ENCODE measurements at regions of chr7 and their contacts with region 1.

Region 1: GRCh38 chr7:20330240-20330927 is at the start of gene ITGB8:
- DNase-seq: peak in 1 of 2 experiments; percentile 81
- H3K4me3 ChIP-seq: peak within 1 kb of the TSS; percentile 55 to 80 (median 73)
- H3K27ac ChIP-seq: peak within 1 kb of the TSS; percentile 75
- H3K4me1 ChIP-seq: peaks cover 0 to 2% (median 0%) of the 10 kb centered on the region in 4 experiments; a peak in 2 of 7 replicates
- H3K27me3 ChIP-seq: no peaks in the 10 kb centered on the region
- CTCF ChIP-seq: no peak
- EP300 ChIP-seq: no peak
- POLR2A ChIP-seq: peak; percentile 59 to 94
- RAD21 ChIP-seq: no peak
- total RNA-seq, gene ITGB8: 3.6 TPM in 2 replicates

Region 2: DNA sequence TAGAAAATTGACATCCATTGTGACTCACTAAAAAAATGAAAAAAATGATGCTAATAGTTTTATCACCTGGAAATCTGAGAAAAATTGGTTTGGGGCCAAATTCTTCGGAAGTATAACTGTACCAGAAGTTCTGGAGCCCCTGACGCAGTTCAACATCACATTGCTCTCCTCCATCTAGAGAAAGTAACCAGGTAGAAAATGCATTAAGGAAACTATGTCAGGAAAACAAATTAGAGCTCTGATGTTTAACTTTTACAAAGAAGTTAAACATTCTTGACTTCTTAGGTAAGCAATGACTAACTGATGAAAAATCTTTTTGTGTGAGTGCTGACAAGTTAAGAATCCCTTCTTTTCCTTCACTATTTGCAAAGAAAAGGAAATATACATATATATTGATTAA is 495.8 kb before region 1 on chr7:
- CTCF ChIA-PET with region 1: no interaction called
- POLR2A ChIA-PET with region 1: no interaction called
- DNase-seq: no peak
- H3K4me3 ChIP-seq: no peak overlapping the region
- H3K27ac ChIP-seq: no peak overlapping the region
- H3K4me1 ChIP-seq: no peaks in the 10 kb centered on the region
- H3K27me3 ChIP-seq: no peaks in the 10 kb centered on the region
- CTCF ChIP-seq: no peak
- EP300 ChIP-seq: no peak
- POLR2A ChIP-seq: no peak
- RAD21 ChIP-seq: no peak

Region 3: GRCh38 chr7:19991936-19992335 is 338.4 kb before region 1 on chr7:
- CTCF ChIA-PET with region 1: no interaction called
- POLR2A ChIA-PET with region 1: no interaction called
- DNase-seq: no peak
- H3K4me3 ChIP-seq: no peak overlapping the region
- H3K27ac ChIP-seq: no peak overlapping the region
- H3K4me1 ChIP-seq: no peaks in the 10 kb centered on the region; a peak in 1 of 7 replicates
- H3K27me3 ChIP-seq: no peaks in the 10 kb centered on the region
- CTCF ChIP-seq: no peak
- EP300 ChIP-seq: no peak
- POLR2A ChIP-seq: no peak
- RAD21 ChIP-seq: no peak

Region 4: DNA sequence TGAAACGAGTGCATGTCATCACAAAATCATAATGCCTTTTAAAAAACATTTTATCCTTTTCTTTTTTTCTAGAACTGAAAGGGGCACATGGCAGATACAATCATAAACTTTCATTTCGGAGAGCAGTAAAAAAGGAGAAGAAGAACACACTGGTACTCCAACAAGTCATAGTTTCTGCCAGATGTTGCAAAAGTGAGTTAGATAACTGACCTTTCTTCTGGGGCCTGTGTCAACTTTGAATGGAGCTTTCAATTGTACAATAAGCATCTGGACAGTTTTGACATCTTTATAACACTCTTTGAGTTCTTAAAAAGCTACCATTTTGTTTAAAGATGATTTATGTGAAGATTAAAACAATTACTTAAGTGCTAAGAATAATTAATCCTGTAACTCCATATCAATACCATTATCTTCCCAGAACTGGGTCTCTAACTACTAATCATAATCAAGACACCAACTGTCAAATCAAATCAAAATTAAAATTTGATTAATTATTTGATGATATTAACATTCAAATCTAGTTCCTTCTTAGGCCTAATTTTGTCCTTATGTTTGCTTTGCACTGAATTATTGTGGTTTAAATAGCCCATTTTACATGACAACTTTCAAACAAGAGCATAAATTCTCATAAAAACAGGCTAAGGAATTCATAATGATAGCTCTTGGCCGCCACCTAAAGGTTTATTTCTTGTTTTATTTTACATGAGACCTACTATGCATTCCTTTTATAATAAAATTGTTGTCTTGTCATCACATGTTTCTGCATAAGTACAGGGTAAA is 19.2 kb before region 1 on chr7:
- CTCF ChIA-PET with region 1: interaction called, 24 read pairs
- POLR2A ChIA-PET with region 1: interaction called, 15 read pairs
- DNase-seq: no peak
- H3K4me3 ChIP-seq: no peak overlapping the region
- H3K27ac ChIP-seq: no peak overlapping the region
- H3K4me1 ChIP-seq: peaks cover 4 to 10% (median 7%) of the 10 kb centered on the region in 4 experiments
- H3K27me3 ChIP-seq: no peaks in the 10 kb centered on the region
- CTCF ChIP-seq: peak in 1 of 3 experiments; percentile 30; a peak in 2 of 4 replicates
- EP300 ChIP-seq: no peak
- POLR2A ChIP-seq: no peak
- RAD21 ChIP-seq: peak; percentile 40 to 52

Region 5: DNA sequence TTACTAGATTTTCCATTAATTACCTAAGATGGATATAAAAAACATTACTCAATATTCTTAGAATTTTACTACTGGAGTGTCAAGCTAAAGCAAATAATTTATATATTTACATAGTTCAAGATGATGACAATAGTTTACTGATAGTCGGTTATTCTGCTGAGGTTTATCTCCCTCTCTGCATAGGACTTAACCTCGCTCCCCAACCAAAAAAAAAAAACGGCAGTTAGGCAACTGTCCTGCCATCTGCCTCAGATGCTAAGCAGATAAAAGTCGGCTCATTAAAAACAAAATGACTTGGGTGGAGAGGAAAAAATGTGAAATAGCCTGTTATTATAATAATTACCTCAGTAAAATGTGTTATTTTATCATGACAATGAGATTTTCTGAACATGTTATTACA is 13.7 kb before region 1 on chr7:
- CTCF ChIA-PET with region 1: interaction called, 24 read pairs
- POLR2A ChIA-PET with region 1: interaction called, 10 read pairs
- DNase-seq: no peak
- H3K4me3 ChIP-seq: no peak overlapping the region
- H3K27ac ChIP-seq: no peak overlapping the region
- H3K4me1 ChIP-seq: no peaks in the 10 kb centered on the region
- H3K27me3 ChIP-seq: no peaks in the 10 kb centered on the region
- CTCF ChIP-seq: no peak
- EP300 ChIP-seq: no peak
- POLR2A ChIP-seq: no peak
- RAD21 ChIP-seq: no peak

Region 6: GRCh38 chr7:20343205-20343604 is 12.8 kb after region 1 on chr7:
- CTCF ChIA-PET with region 1: interaction called, 5 read pairs
- POLR2A ChIA-PET with region 1: interaction called, 27 read pairs
- DNase-seq: no peak
- H3K4me3 ChIP-seq: no peak overlapping the region
- H3K27ac ChIP-seq: no peak overlapping the region
- H3K4me1 ChIP-seq: peaks cover 0 to 9% (median 2%) of the 10 kb centered on the region in 4 experiments; a peak in 5 of 7 replicates
- H3K27me3 ChIP-seq: no peaks in the 10 kb centered on the region
- CTCF ChIP-seq: peak; percentile 24 to 60 (median 54); a peak in 3 of 4 replicates
- EP300 ChIP-seq: no peak
- POLR2A ChIP-seq: no peak
- RAD21 ChIP-seq: peak; percentile 60 to 66

Measured in H1 (cell line).